ENCODE measurements at regions of chr14 and their contacts with region 1.

Region 1: GRCh38 chr14:68862954-68863594 is 70.2 kb upstream of the ZFP36L1 start:
- DNase-seq: peak; percentile 21 to 75 (median 55)
- ATAC-seq: peak in 3 of 4 experiments; percentile 32 to 51 (median 50)
- H3K4me3 ChIP-seq: no peak overlapping the region
- H3K4me3 Mint-ChIP-seq: no peak overlapping the region
- H3K27ac ChIP-seq: no peak overlapping the region
- H3K27ac Mint-ChIP-seq: no peak overlapping the region
- H3K4me1 ChIP-seq: no peaks in the 10 kb centered on the region
- H3K4me1 Mint-ChIP-seq: no peaks in the 10 kb centered on the region
- H3K27me3 ChIP-seq: no peaks in the 10 kb centered on the region
- H3K27me3 Mint-ChIP-seq: no peaks in the 10 kb centered on the region

Region 2: GRCh38 chr14:68843471-68844209 is 19.4 kb before region 1 on chr14:
- CTCF ChIA-PET with region 1: no interaction called
- POLR2A ChIA-PET with region 1: no interaction called
- DNase-seq: peak; percentile 46 to 85 (median 69)
- ATAC-seq: peak; percentile 61 to 89 (median 82)
- H3K4me3 ChIP-seq: peak overlapping the region in 1 of 2 donors; percentile 23
- H3K4me3 Mint-ChIP-seq: peak overlapping the region; percentile 25 to 50 (median 37)
- H3K27ac ChIP-seq: no peak overlapping the region
- H3K27ac Mint-ChIP-seq: no peak overlapping the region
- H3K4me1 ChIP-seq: peaks cover 6 to 19% of the 10 kb centered on the region in 2 experiments
- H3K4me1 Mint-ChIP-seq: peaks cover 19 to 32% (median 20%) of the 10 kb centered on the region in 3 donors
- H3K27me3 ChIP-seq: peaks cover 0 to 11% of the 10 kb centered on the region in 2 experiments
- H3K27me3 Mint-ChIP-seq: peaks cover 0 to 8% of the 10 kb centered on the region in 2 donors

Region 3: GRCh38 chr14:69428289-69428998 is 565.4 kb after region 1 on chr14:
- CTCF ChIA-PET with region 1: interaction called in 1 of 2 experiments, 10 read pairs
- POLR2A ChIA-PET with region 1: no interaction called
- DNase-seq: no peak
- ATAC-seq: no peak
- H3K4me3 ChIP-seq: no peak overlapping the region
- H3K4me3 Mint-ChIP-seq: no peak overlapping the region
- H3K27ac ChIP-seq: no peak overlapping the region
- H3K27ac Mint-ChIP-seq: no peak overlapping the region
- H3K4me1 ChIP-seq: no peaks in the 10 kb centered on the region
- H3K4me1 Mint-ChIP-seq: peaks cover 6 to 15% (median 12%) of the 10 kb centered on the region in 3 donors
- H3K27me3 ChIP-seq: no peaks in the 10 kb centered on the region
- H3K27me3 Mint-ChIP-seq: no peaks in the 10 kb centered on the region

Measured in T-cell (primary cell).